ENCODE measurements at regions of chr7 and their contacts with region 1.

Region 1: DNA sequence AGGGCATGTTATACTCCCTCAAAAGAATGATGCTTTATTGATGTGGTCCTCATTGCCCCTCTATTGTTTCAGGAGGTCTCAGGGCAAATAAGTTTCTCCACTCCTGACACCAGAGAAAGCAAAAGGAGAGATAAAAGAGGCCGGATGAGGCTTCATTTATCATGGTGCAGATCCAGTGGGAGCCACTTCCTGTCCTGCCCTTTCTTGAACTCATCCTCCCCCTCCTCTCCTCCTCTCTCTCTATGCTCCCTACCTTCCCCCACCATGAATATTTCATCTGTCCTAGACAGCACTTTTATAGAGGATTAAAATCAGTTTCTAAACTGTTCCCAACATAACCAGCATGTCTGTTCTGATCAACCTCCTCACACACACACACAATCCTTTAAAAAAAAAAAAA is 172.2 kb upstream of the KMT2E start:
- DNase-seq: no peak
- H3K4me3 ChIP-seq: no peak overlapping the region
- H3K27ac ChIP-seq: no peak overlapping the region
- H3K4me1 ChIP-seq: no peaks in the 10 kb centered on the region
- H3K27me3 ChIP-seq: peaks cover 5% of the 10 kb centered on the region
- CTCF ChIP-seq: no peak
- EP300 ChIP-seq: no peak
- POLR2A ChIP-seq: no peak

Region 2: GRCh38 chr7:104643587-104644217 is 198.1 kb before region 1 on chr7:
- in situ Hi-C with region 1: no loop called
- intact Hi-C with region 1: loop called (anchors 1 kb)
- DNase-seq: no peak
- H3K4me3 ChIP-seq: no peak overlapping the region
- H3K27ac ChIP-seq: no peak overlapping the region
- H3K4me1 ChIP-seq: no peaks in the 10 kb centered on the region
- H3K27me3 ChIP-seq: no peaks in the 10 kb centered on the region
- CTCF ChIP-seq: peak; percentile 11 to 26 (median 24)
- EP300 ChIP-seq: no peak
- POLR2A ChIP-seq: no peak

Region 3: GRCh38 chr7:105156731-105157130 is 314.9 kb after region 1 on chr7:
- in situ Hi-C with region 1: no loop called
- intact Hi-C with region 1: no loop called
- DNase-seq: no peak
- H3K4me3 ChIP-seq: no peak overlapping the region
- H3K27ac ChIP-seq: no peak overlapping the region
- H3K4me1 ChIP-seq: no peaks in the 10 kb centered on the region
- H3K27me3 ChIP-seq: no peaks in the 10 kb centered on the region
- CTCF ChIP-seq: no peak
- EP300 ChIP-seq: no peak
- POLR2A ChIP-seq: no peak